ENCODE measurements at regions of chr14 and their contacts with region 1.

Region 1: GRCh38 chr14:98234208-98234607 is 1037.8 kb downstream of the BCL11B start:
- DNase-seq: no peak
- H3K4me3 Mint-ChIP-seq: no peak overlapping the region
- H3K27ac Mint-ChIP-seq: no peak overlapping the region
- H3K4me1 Mint-ChIP-seq: peaks cover 43% of the 10 kb centered on the region
- H3K27me3 Mint-ChIP-seq: no peaks in the 10 kb centered on the region

Region 2: DNA sequence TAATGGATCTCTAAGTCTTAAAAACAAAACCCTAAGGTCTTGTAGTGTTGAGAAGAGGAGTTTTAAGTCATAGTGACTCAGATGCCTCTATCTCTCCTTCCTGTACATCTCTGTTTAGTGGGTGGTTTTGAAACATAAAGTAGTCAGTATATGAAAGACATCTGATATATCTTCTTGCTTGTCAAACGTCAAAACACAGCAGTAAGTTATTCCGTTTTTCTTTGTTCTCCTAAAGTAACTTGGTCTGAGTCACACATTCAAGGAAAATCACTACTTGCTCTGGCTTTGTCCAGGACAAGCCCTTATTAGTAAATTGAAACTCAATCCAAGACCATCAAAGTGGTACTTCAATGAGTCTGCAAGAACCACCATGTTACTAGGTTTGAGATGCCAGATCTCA is 134.7 kb before region 1 on chr14:
- intact Hi-C with region 1: loop called (anchors 1 kb)
- DNase-seq: no peak
- H3K4me3 Mint-ChIP-seq: no peak overlapping the region
- H3K27ac Mint-ChIP-seq: peak overlapping the region; percentile 29
- H3K4me1 Mint-ChIP-seq: peaks cover 31% of the 10 kb centered on the region
- H3K27me3 Mint-ChIP-seq: no peaks in the 10 kb centered on the region

Region 3: GRCh38 chr14:98138666-98139065 is 95.5 kb before region 1 on chr14:
- intact Hi-C with region 1: loop called (anchors 2 kb)
- DNase-seq: peak; percentile 62
- H3K4me3 Mint-ChIP-seq: peak overlapping the region; percentile 53
- H3K27ac Mint-ChIP-seq: peak overlapping the region; percentile 61
- H3K4me1 Mint-ChIP-seq: peaks cover 76% of the 10 kb centered on the region
- H3K27me3 Mint-ChIP-seq: no peaks in the 10 kb centered on the region

Region 4: DNA sequence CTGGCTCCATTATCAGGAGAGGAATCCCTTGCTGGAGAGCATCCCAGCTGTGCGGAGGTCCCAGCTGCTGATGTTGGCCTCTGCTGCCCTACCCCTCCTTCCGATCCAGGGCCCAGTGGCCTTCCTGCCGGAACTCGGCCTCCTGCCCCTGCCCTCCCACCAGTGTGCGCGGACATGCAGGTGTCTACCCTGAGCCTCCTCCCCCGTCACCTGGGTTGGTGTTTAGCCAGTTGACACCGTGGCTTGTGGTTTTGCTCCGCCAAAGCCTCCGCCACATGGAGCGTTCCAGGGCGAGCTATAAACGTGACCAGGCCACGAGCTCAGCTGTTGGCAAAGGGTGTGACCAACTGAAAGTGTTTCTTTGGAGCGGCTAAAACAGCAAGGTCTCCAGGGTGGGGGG is 66.5 kb before region 1 on chr14:
- intact Hi-C with region 1: loop called (anchors 1 kb)
- DNase-seq: no peak
- H3K4me3 Mint-ChIP-seq: no peak overlapping the region
- H3K27ac Mint-ChIP-seq: peak overlapping the region; percentile 37
- H3K4me1 Mint-ChIP-seq: peaks cover 57% of the 10 kb centered on the region
- H3K27me3 Mint-ChIP-seq: no peaks in the 10 kb centered on the region

Region 5: GRCh38 chr14:99271951-99272631 is 1037.9 kb after region 1 on chr14 and contains the start of gene BCL11B:
- intact Hi-C with region 1: loop called (anchors 5 kb)
- DNase-seq: peak; percentile 88
- H3K4me3 Mint-ChIP-seq: peak within 1 kb of the TSS; percentile 93
- H3K27ac Mint-ChIP-seq: peak within 1 kb of the TSS; percentile 94
- H3K4me1 Mint-ChIP-seq: peaks cover 37% of the 10 kb centered on the region
- H3K27me3 Mint-ChIP-seq: peaks cover 10% of the 10 kb centered on the region
- total RNA-seq, gene BCL11B: 34.1 and 34.9 TPM in 2 replicates